PC-3 (cell line): ENCODE measurements at regions of chr14 and their contacts with region 1.

Region 1: DNA sequence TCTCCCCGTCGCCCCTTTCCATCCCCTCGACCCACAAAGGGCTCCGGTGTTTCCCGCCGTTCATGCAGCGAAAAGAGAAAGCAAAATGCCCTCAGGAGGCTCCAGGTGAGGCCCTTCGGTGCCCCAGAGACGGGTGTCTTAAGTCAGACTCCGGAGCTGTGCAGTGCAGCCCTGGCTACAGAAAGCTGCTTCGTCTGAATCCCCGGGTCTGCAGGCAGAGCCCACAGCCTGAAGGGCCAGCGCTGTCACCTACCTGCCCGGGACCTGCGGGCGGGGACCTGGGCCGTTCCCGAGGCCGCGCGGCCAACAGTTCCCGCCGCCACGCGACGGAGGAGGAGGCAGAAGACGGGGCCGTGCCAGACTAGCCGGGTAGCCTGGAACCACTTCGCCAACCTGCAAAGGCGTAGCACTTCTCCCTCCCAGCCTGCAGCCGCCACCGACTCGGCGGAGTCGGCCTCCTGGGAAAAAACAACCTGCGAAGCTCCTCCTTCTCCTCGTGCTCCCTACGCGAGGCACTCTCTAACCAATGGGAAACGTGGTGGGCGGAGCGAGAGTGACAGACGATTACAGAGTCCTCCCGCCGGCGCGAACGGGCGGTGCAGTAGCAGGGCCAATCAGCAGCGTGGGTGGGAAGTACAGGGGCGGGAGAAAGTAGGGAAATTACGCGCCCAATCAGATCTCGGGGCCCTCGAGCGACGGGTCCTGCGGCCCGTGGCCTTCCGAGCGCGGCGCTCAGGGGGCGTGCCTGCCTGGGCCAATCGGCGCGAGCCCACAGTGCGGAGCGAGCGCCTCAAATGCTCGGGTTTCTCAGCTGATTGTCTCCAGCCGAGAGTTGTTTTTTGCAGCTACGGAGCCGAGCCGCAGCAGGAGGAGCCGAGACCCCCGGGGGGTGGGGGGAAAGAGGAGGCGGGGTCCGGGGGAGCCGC is at the starts of genes GPR137C and TXNDC16:
- DNase-seq: peak; percentile 100
- ATAC-seq: peak; percentile 91
- H3K4me3 ChIP-seq: peak within 1 kb of the TSS; percentile 87
- H3K27ac ChIP-seq: peak within 1 kb of the TSS; percentile 10; the same call in 1 of the 2 replicates
- H3K4me1 ChIP-seq: peaks cover 20% of the 10 kb centered on the region
- H3K27me3 ChIP-seq: no peaks in the 10 kb centered on the region
- CTCF ChIP-seq: no peak
- total RNA-seq, gene GPR137C: 0.63 and 0.91 TPM in 2 replicates
- total RNA-seq, gene TXNDC16: 3.9 and 4.0 TPM in 2 replicates

Region 2: DNA sequence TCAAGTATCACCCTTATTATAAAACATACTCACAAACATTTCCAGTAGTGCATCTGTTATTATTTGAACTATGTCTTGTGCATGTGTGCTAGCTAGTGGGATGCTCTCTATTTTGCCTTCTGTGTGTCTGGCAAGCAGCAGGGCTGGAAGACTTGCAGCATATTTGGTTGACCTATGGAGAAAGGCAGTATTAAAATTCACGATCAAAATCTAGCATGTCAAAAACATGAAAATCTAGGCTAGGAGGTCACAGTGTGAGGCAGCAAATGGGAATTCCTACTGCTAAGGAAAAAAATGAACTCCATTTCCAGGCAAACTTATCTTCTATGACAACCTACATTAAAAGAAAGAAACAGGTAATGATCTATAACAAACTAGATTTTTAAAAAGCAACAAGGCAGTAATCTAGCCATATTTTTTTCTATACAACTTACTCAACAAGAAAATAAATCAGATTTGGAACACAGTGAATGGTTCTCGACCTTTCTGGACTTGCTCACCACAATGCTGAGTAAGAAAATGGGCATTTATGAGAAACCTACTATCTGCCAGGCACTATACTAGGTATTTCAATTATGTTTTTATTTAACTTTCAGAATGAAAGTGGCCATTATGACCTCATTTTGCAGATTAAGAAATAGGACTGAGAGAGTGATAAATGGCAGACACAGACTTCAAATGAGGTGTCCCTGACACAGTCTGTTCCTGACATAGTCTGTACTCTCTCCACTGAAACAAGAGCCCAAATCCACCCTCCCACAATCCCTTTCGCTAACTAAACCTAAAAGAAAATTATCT is 96.8 kb before region 1 on chr14:
- CTCF ChIA-PET with region 1: no interaction called
- POLR2A ChIA-PET with region 1: no interaction called
- intact Hi-C with region 1: no loop called
- DNase-seq: peak; percentile 70
- ATAC-seq: no peak
- H3K4me3 ChIP-seq: no peak overlapping the region
- H3K27ac ChIP-seq: peak overlapping the region; percentile 4; the same call in 1 of the 2 replicates
- H3K4me1 ChIP-seq: peaks cover 40% of the 10 kb centered on the region
- H3K27me3 ChIP-seq: no peaks in the 10 kb centered on the region
- CTCF ChIP-seq: no peak

Region 3: DNA sequence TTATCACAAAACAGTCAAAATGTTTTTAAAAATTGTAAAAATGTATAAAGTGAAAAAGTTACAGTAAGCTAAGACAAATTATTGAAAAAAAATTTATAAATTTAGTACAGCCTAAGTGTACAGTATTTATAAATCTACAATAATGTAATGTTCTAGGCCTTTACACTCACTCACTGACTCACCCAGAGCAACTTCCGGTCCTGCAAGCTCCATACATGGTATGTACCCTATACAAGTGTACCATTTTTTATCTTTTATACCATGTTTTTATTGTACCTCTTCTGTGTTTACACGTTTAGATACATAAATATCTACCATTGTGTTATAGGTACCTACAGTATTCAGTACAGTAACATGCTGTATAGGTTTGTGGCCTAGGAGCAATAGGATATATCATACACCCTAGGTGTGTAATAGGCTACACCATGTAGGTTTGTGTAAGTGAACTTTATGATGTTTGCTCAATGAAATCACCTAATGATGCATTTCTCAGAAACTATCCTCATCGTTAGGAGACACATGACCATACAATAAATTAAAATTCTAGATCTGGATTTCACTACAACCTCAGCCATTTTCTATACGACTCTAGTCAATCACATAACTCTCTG is 66.9 kb before region 1 on chr14:
- CTCF ChIA-PET with region 1: interaction called, 5 read pairs
- POLR2A ChIA-PET with region 1: no interaction called
- intact Hi-C with region 1: loop called (anchors 1 kb)
- DNase-seq: peak; percentile 24
- ATAC-seq: peak; percentile 85
- H3K4me3 ChIP-seq: no peak overlapping the region
- H3K27ac ChIP-seq: no peak overlapping the region
- H3K4me1 ChIP-seq: peaks cover 14% of the 10 kb centered on the region; the same call in 1 of the 2 replicates
- H3K27me3 ChIP-seq: no peaks in the 10 kb centered on the region
- CTCF ChIP-seq: no peak

Region 4: DNA sequence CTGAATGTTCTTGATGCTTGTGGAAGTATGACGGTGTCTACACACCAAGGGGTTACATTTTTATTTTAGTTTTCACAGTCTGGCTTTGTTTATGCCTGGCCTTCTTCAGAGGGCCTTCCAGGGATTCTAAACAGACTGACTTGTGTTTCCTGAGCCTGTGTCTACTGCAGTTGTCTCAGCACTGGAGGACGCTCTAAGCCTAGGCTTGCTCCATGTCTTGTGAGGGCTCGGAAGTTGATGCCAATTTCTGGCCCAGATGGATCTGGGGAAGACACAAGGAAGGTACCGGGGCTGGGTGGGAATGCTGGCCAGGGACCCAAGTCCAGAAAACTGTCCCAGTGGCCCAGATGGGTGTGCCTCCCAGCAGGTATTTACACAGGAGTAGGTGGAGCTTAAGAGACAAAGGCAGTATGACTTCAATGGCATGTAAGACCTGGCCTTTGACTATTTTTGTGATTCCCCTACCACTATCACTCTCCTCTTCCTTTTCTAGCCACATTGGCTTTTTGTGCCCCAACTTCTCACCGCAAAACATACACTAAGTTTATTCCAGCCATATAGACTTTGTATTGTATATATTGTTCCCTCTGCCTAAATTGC is 57.2 kb after region 1 on chr14:
- CTCF ChIA-PET with region 1: no interaction called
- POLR2A ChIA-PET with region 1: no interaction called
- intact Hi-C with region 1: no loop called
- DNase-seq: no peak
- ATAC-seq: no peak
- H3K4me3 ChIP-seq: no peak overlapping the region
- H3K27ac ChIP-seq: no peak overlapping the region
- H3K4me1 ChIP-seq: no peaks in the 10 kb centered on the region
- H3K27me3 ChIP-seq: no peaks in the 10 kb centered on the region
- CTCF ChIP-seq: no peak

Region 5: GRCh38 chr14:52640137-52640536 is 87.8 kb after region 1 on chr14:
- CTCF ChIA-PET with region 1: no interaction called
- POLR2A ChIA-PET with region 1: interaction called, 3 read pairs
- intact Hi-C with region 1: loop called (anchors 5 kb)
- DNase-seq: no peak
- ATAC-seq: no peak
- H3K4me3 ChIP-seq: no peak overlapping the region
- H3K27ac ChIP-seq: no peak overlapping the region
- H3K4me1 ChIP-seq: no peaks in the 10 kb centered on the region
- H3K27me3 ChIP-seq: no peaks in the 10 kb centered on the region
- CTCF ChIP-seq: no peak

Region 6: DNA sequence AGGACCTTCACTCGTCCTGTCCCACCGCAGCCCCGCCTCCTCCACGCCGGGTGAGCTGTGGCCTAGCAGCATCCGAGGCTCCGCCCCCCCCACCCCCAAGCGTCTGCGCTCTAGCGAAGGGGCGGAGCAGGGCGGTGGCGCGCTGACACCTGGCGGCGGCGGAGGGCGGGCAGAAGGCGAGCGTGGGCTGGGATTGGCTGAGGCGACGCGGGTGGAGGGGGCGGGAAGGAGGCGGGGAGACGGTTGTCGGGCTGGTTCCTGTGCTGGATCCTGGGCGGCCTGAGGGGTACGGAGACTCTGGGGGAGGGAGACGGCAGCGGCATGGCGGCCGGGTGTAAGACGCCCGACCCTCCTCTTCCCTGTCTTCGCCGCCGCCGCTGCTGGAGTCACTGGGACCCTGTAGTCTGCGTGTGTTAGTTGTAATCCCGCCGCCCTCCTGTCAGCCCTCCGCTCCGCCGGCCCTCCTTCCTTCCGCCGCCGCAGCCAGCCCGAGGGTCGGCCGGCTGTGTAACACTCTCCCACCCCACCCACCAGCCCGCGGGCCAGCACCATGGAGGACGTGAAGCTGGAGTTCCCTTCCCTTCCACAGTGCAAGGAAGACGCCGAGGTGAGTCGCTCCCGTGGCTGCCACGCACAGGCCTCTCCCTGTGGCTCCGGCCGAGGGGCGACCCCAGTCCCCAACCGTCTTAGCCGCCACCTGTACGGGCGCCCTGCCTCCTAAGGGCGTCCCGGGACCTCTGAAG is 177.8 kb after region 1 on chr14 and contains the start of gene STYX:
- CTCF ChIA-PET with region 1: no interaction called
- POLR2A ChIA-PET with region 1: no interaction called
- intact Hi-C with region 1: loop called (anchors 2 kb)
- DNase-seq: peak; percentile 99
- ATAC-seq: peak; percentile 96
- H3K4me3 ChIP-seq: peak within 1 kb of the TSS; percentile 80
- H3K27ac ChIP-seq: peak within 1 kb of the TSS; percentile 19
- H3K4me1 ChIP-seq: no peaks in the 10 kb centered on the region; the same call in 1 of the 2 replicates
- H3K27me3 ChIP-seq: no peaks in the 10 kb centered on the region
- CTCF ChIP-seq: no peak
- total RNA-seq, gene STYX: 11.1 and 14.1 TPM in 2 replicates

Region 7: GRCh38 chr14:52936437-52936836 is 384.1 kb after region 1 on chr14:
- CTCF ChIA-PET with region 1: no interaction called
- POLR2A ChIA-PET with region 1: no interaction called
- intact Hi-C with region 1: no loop called
- DNase-seq: no peak
- ATAC-seq: no peak
- H3K4me3 ChIP-seq: no peak overlapping the region
- H3K27ac ChIP-seq: no peak overlapping the region
- H3K4me1 ChIP-seq: no peaks in the 10 kb centered on the region
- H3K27me3 ChIP-seq: no peaks in the 10 kb centered on the region
- CTCF ChIP-seq: no peak

Region 8: GRCh38 chr14:52950898-52951689 is 398.8 kb after region 1 on chr14 and contains the start of gene FERMT2:
- CTCF ChIA-PET with region 1: no interaction called
- POLR2A ChIA-PET with region 1: no interaction called
- intact Hi-C with region 1: loop called (anchors 10 kb)
- DNase-seq: peak; percentile 83
- ATAC-seq: peak; percentile 90
- H3K4me3 ChIP-seq: peak within 1 kb of the TSS; percentile 82
- H3K27ac ChIP-seq: peak within 1 kb of the TSS; percentile 80
- H3K4me1 ChIP-seq: peaks cover 25% of the 10 kb centered on the region
- H3K27me3 ChIP-seq: no peaks in the 10 kb centered on the region
- CTCF ChIP-seq: no peak
- total RNA-seq, gene FERMT2: 29.1 and 38.6 TPM in 2 replicates